ENCODE measurements at regions of chr7 and their contacts with region 1.

Region 1: GRCh38 chr7:37201003-37201875 is 247.4 kb downstream of the ELMO1 start:
- DNase-seq: peak; percentile 55 to 67 (median 66)
- H3K4me3 ChIP-seq: no peak overlapping the region
- H3K4me3 Mint-ChIP-seq: no peak overlapping the region
- H3K27ac ChIP-seq: no peak overlapping the region
- H3K27ac Mint-ChIP-seq: no peak overlapping the region
- H3K4me1 ChIP-seq: no peaks in the 10 kb centered on the region
- H3K4me1 Mint-ChIP-seq: peaks cover 2% of the 10 kb centered on the region
- H3K27me3 ChIP-seq: no peaks in the 10 kb centered on the region
- H3K27me3 Mint-ChIP-seq: peaks cover 0 to 1% (median 0%) of the 10 kb centered on the region in 3 donors
- CTCF ChIP-seq: peak; percentile 84

Region 2: GRCh38 chr7:36487756-36488336 is 713.4 kb before region 1 on chr7:
- intact Hi-C with region 1: loop called in 1 of 2 experiments (anchors 10 kb)
- DNase-seq: peak; percentile 12 to 38 (median 24)
- H3K4me3 ChIP-seq: no peak overlapping the region
- H3K4me3 Mint-ChIP-seq: no peak overlapping the region
- H3K27ac ChIP-seq: no peak overlapping the region
- H3K27ac Mint-ChIP-seq: no peak overlapping the region
- H3K4me1 ChIP-seq: no peaks in the 10 kb centered on the region
- H3K4me1 Mint-ChIP-seq: no peaks in the 10 kb centered on the region
- H3K27me3 ChIP-seq: no peaks in the 10 kb centered on the region
- H3K27me3 Mint-ChIP-seq: no peaks in the 10 kb centered on the region
- CTCF ChIP-seq: peak; percentile 52

Region 3: DNA sequence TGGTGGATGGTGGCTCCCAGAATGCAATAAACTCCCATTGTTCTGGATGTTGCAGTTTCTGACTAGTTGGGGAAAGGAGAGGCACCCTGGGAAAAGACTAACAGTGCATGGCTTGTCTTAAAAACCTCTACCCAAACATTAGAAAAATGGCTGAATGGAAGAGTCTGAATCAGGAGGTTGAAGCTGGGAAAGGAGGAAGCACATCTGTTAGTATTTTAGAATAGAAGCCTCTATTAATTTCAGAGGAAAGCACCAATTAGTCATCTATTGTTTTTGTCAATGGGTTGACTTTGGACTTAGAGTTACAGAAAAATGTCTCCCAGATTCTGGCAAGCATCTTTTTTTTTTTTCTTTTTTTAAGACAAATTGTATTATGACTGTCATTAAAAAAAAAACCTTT is 303.6 kb after region 1 on chr7:
- intact Hi-C with region 1: loop called in 1 of 2 experiments (anchors 10 kb)
- DNase-seq: no peak
- H3K4me3 ChIP-seq: no peak overlapping the region
- H3K4me3 Mint-ChIP-seq: no peak overlapping the region
- H3K27ac ChIP-seq: no peak overlapping the region
- H3K27ac Mint-ChIP-seq: peak overlapping the region in 1 of 7 donors; percentile 77
- H3K4me1 ChIP-seq: no peaks in the 10 kb centered on the region
- H3K4me1 Mint-ChIP-seq: no peaks in the 10 kb centered on the region
- H3K27me3 ChIP-seq: no peaks in the 10 kb centered on the region
- H3K27me3 Mint-ChIP-seq: peaks cover 0 to 2% (median 0%) of the 10 kb centered on the region in 3 donors
- CTCF ChIP-seq: no peak

Region 4: DNA sequence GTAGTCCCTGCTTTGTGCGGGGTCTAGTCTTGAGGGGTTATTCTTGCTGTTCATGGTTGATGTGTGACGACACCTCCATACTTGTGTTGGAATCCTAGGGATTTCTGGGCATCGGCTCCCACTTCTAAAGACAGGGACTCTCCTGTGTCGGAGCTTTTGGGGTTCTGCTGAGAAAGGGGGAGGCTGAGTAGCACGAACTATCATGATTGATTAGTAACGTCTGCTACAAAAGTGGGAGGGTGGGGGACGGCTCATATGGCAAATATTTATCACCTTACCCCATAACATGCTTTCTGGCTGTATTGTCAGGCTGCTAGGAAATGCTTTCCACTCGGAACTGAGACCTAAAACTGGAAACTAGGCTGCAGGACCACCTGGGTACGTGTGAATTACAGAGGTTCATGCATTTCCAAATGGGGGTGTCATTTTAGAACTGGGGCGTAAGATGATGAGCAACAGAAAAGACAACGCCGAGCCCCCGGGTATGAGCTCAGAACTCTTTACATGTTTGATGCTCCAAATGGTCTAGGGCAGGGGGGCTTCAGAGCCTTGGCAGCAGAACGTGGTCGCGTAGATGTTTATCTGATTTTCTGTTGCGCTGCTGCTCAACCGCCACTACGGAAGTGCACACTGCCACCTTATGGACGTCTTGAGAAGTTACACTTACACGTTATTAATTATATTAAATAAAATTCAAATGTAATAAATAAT is 632.0 kb after region 1 on chr7:
- intact Hi-C with region 1: loop called in 1 of 2 experiments (anchors 10 kb)
- DNase-seq: peak; percentile 35 to 73 (median 68)
- H3K4me3 ChIP-seq: peak overlapping the region; percentile 36 to 73 (median 57)
- H3K4me3 Mint-ChIP-seq: peak overlapping the region; percentile 88 to 96
- H3K27ac ChIP-seq: no peak overlapping the region
- H3K27ac Mint-ChIP-seq: peak overlapping the region in 3 of 7 donors; percentile 13 to 52 (median 52)
- H3K4me1 ChIP-seq: peaks cover 15 to 19% of the 10 kb centered on the region in 2 donors
- H3K4me1 Mint-ChIP-seq: peaks cover 19% of the 10 kb centered on the region
- H3K27me3 ChIP-seq: no peaks in the 10 kb centered on the region
- H3K27me3 Mint-ChIP-seq: peaks cover 0 to 3% (median 2%) of the 10 kb centered on the region in 3 donors
- CTCF ChIP-seq: peak; percentile 78

Measured in CD14-positive monocyte (primary cell).